Activated CD8-positive, alpha-beta memory T cell treated with anti-CD3 and anti-CD28 coated beads, Interleukin-2, amount 10 ng/mL, durations not matched to agents 7 days and 5 days (primary cell): ENCODE measurements at regions of chrX and their contacts with region 1.

Region 1: DNA sequence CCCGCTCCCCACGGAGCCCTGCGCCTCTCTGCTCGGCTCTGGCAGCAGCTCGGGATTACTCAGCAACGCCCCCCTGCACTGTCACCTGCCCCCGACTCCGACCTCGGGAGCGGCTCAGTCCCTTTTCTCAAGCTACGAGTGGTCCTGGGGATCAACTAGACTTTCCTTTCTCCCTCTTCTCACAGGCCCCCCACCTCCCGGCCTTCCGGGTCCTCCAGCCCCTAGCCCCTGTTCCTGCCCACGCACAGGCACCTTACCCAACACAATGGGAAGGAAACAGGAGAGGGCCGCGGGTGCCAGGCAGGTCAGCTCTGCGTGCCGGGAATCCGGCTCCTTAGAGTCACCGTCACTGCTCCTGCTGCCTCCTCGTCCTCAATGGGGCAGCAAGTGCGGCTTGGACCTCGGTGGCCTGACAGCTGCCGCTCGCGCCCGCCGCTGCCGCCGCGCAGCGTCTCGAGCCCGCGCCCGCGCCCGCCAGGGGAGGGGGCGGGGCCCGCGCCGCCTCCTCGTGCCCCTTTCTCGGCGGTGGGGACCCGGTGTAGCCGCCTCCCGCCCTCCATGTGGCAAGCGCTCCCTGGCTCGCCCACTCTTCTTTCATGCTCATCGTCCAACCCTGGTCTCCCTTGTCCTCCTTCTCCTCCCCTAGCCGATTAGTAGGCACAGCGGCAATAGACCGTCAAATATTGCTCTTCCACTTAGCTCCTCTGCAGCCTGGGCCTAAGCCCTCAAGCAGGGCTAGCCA is at the start of gene RAB9B:
- DNase-seq: peak; percentile 69
- ATAC-seq: peak; percentile 94
- H3K4me3 Mint-ChIP-seq: peak within 1 kb of the TSS; percentile 73
- H3K27ac Mint-ChIP-seq: no peak within 1 kb of the TSS
- H3K4me1 Mint-ChIP-seq: peaks cover 3% of the 10 kb centered on the region
- H3K27me3 Mint-ChIP-seq: peaks cover 13% of the 10 kb centered on the region
- total RNA-seq, gene RAB9B: 0.19 to 0.26 TPM

Region 2: GRCh38 chrX:103730796-103731493 is 101.0 kb before region 1 on chrX:
- CTCF ChIA-PET with region 1: no interaction called
- DNase-seq: no peak
- ATAC-seq: no peak
- H3K4me3 Mint-ChIP-seq: no peak overlapping the region
- H3K27ac Mint-ChIP-seq: no peak overlapping the region
- H3K4me1 Mint-ChIP-seq: peaks cover 13% of the 10 kb centered on the region
- H3K27me3 Mint-ChIP-seq: peaks cover 14% of the 10 kb centered on the region

Region 3: DNA sequence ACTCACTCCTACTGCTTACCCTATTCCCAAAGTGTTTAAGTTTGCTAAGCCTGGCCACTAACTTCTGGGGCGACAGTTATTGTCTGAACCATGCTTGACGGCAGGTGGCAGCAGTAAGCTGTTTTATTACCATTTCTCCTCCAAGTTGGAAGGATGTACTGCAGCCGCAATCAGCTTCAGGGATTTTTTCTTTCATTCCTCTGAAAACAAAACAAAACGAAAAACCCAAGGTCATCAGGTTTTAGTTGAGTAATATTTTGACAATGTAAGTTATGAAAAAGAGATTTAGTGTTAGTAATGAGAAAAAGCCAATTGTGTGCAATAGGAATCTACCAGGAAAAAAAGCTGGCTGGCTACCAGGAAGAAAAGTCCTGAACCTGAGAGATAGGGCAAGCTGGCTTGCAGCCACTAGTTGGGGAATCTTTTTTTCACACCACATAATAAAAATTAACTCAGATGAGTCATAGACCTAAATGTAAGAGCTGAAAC is 13.2 kb after region 1 on chrX:
- CTCF ChIA-PET with region 1: interaction called, 12 read pairs
- DNase-seq: peak; percentile 45
- ATAC-seq: peak; percentile 49
- H3K4me3 Mint-ChIP-seq: no peak overlapping the region
- H3K27ac Mint-ChIP-seq: no peak overlapping the region
- H3K4me1 Mint-ChIP-seq: no peaks in the 10 kb centered on the region
- H3K27me3 Mint-ChIP-seq: peaks cover 5% of the 10 kb centered on the region